ENCODE measurements at regions of chr10 and their contacts with region 1.

Region 1: DNA sequence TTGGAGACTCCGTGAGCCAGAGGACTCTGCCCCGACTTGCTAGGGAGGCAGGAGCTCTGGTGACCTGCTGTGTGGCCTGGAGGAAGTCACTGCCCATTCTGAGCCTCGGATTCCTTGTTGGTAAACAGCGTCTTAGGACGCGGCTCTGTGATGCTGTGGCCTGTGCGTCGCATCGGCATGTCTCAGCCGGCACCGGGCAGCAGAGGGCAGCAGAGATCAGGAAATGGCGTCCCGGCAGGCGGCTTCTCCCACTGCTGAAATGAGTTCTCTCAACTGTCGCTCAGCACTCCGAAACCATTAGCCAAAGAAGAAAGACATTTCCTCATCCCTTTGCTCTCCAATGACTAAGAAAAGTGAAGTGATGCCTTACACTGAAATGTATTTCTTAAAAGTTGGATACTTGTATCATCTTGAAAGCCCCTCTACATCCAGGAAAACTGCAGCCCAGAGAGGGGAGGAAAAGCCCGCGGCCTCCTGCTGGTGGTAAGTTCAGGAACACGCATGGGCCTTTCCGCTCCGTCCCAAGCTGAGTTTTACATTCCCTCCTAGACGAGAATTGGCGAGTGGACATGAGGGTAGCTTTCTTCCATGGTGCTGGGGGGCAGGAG is 91.7 kb downstream of the WDR11 start:
- DNase-seq: peak; percentile 61 to 93 (median 82)
- ATAC-seq: peak; percentile 85 to 94 (median 94)
- H3K4me3 ChIP-seq: peak overlapping the region in 1 of 4 donors; percentile 22
- H3K27ac ChIP-seq: no peak overlapping the region
- H3K4me1 ChIP-seq: no peaks in the 10 kb centered on the region
- H3K27me3 ChIP-seq: no peaks in the 10 kb centered on the region
- CTCF ChIP-seq: peak; percentile 74 to 86 (median 78)

Region 2: DNA sequence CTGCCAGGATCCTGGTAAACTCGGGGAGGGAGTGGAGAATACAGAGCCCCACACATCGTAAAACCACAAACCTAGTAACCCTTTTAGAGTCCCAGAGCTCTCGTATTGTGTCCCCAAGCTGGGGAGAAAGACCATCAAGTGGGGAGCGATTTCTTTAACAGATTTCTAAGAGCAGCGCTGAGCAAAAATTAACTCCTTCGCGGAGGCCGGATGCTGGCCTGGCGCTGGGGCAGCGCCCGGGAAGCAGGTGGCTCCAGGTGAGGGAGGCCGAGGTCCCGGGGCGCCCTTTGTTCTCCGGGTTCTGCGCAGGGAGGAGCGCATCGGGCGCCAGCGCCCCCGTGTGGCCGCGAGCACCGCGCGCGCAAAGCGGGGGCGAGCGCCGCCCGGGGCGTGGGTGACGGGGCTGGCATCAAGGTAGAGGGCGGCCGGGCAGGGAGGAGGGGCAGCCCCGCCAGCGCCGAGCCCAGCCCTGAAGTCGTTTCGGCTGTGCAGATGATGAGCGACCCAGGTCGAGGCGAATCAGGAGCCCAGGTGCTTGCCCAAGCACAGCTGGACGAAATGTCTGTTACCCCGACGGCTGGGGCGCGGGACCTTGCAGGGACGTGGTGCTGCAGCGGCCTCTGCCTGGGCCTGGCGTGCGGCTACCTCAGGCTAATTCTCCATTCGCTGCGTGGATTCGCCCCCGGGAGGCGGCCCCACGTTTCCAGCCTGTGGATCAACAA is 665.7 kb after region 1 on chr10:
- intact Hi-C with region 1: loop called in 1 of 3 experiments (anchors 10 kb)
- DNase-seq: peak; percentile 33 to 87 (median 68)
- ATAC-seq: peak; percentile 96 to 97 (median 97)
- H3K4me3 ChIP-seq: peak overlapping the region in 2 of 4 donors; percentile 6 to 26
- H3K27ac ChIP-seq: no peak overlapping the region
- H3K4me1 ChIP-seq: peaks cover 0 to 3% (median 0%) of the 10 kb centered on the region in 3 donors
- H3K27me3 ChIP-seq: no peaks in the 10 kb centered on the region
- CTCF ChIP-seq: peak; percentile 83 to 94 (median 90)

Region 3: DNA sequence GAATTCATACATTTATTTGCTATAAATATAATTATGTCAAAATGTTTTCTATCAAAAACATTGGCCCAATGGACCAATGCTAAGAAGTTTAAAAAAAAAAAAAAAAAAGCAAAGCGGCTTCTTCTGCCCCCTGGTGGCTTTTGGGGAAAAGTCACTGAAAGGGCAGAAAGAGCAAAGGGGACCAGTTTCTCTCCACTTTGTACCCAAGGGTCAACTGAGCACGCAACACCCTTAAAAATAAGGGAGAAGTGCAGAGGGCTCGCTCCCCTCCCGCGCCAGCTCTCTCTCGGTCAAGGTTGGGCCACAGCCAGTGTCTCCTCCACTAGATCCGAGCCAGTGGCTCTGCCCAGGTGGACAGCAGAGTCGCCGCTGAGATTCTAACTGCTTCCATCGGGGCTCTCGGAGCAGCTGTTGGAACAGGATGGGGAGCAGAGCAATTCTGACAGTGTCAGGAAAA is 791.7 kb after region 1 on chr10:
- intact Hi-C with region 1: loop called in 2 of 3 experiments (anchors 5 kb)
- DNase-seq: peak in 2 of 6 donors; percentile 17 to 35
- ATAC-seq: peak in 3 of 4 donors; percentile 43 to 66 (median 43)
- H3K4me3 ChIP-seq: no peak overlapping the region
- H3K27ac ChIP-seq: no peak overlapping the region
- H3K4me1 ChIP-seq: no peaks in the 10 kb centered on the region
- H3K27me3 ChIP-seq: peaks cover 0 to 6% (median 0%) of the 10 kb centered on the region in 4 donors
- CTCF ChIP-seq: peak; percentile 55 to 69 (median 60)

Region 4: GRCh38 chr10:121886997-121887622 is 944.2 kb after region 1 on chr10:
- intact Hi-C with region 1: loop called in 2 of 3 experiments (anchors 10 kb)
- DNase-seq: peak in 5 of 6 donors; percentile 27 to 75 (median 49)
- ATAC-seq: peak; percentile 84 to 99 (median 90)
- H3K4me3 ChIP-seq: no peak overlapping the region
- H3K27ac ChIP-seq: no peak overlapping the region
- H3K4me1 ChIP-seq: no peaks in the 10 kb centered on the region
- H3K27me3 ChIP-seq: no peaks in the 10 kb centered on the region
- CTCF ChIP-seq: peak; percentile 30 to 82 (median 62)

Region 5: GRCh38 chr10:121899727-121900126 is 956.8 kb after region 1 on chr10:
- intact Hi-C with region 1: loop called in 1 of 3 experiments (anchors 10 kb)
- DNase-seq: peak in 4 of 6 donors; percentile 22 to 59 (median 38)
- ATAC-seq: peak; percentile 87 to 91 (median 90)
- H3K4me3 ChIP-seq: no peak overlapping the region
- H3K27ac ChIP-seq: peak overlapping the region in 2 of 4 donors; percentile 11 to 19
- H3K4me1 ChIP-seq: peaks cover 3 to 9% (median 6%) of the 10 kb centered on the region in 3 donors
- H3K27me3 ChIP-seq: no peaks in the 10 kb centered on the region
- CTCF ChIP-seq: no peak